ENCODE measurements at regions of chr11 and their contacts with region 1.

Region 1: GRCh38 chr11:40314327-40314726 is 1145.1 kb downstream of the LRRC4C start:
- DNase-seq: no peak
- ATAC-seq: no peak
- H3K4me3 ChIP-seq: no peak overlapping the region
- H3K27ac ChIP-seq: no peak overlapping the region
- H3K4me1 ChIP-seq: no peaks in the 10 kb centered on the region
- H3K27me3 ChIP-seq: no peaks in the 10 kb centered on the region
- CTCF ChIP-seq: no peak

Region 2: DNA sequence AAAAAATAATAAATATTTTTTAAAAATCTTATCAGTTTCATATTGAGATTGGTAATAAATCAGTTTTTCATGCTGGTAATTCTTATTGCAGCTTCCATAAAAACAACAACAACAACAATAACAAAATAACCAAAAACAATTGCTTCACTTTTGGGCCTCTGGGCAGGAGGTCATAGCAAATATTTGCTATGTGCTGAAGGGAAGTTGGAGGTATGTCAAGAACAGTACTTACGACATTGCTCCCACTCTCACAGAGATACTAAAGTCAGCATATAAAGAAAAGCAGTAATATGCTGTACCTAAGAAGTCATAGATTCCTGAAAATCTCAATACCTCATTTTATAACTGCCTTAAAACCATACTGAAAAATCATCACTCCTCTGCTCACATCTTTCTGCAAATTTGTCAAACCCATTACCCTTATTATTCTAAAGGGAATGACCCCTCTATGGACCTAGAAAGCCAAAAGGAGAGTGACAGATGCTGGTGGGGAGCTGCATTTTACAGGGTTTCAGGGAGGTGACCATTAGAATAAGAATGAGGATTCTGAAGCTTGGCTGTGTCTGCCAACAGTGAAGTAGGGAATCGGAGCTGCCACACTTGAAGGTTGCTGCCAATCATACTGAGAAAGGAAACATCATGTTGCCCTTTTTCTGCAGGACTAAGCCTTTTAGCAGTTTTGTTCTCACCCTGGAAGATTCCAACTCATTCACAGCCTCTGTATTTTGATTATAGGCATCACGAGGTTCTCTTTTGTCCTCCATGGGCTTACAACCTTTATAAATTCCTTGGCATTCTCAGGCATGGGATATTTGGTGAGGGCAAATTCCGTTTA is 402.2 kb after region 1 on chr11:
- CTCF ChIA-PET with region 1: no interaction called
- POLR2A ChIA-PET with region 1: no interaction called
- in situ Hi-C with region 1: no loop called
- intact Hi-C with region 1: loop called (anchors 5 kb)
- DNase-seq: no peak
- ATAC-seq: no peak
- H3K4me3 ChIP-seq: no peak overlapping the region
- H3K27ac ChIP-seq: no peak overlapping the region
- H3K4me1 ChIP-seq: no peaks in the 10 kb centered on the region
- H3K27me3 ChIP-seq: no peaks in the 10 kb centered on the region
- CTCF ChIP-seq: no peak